ENCODE measurements at regions of chr20 and their contacts with region 1.

Region 1: GRCh38 chr20:63537525-63538203 is 488 bp upstream of the PTK6 start:
- DNase-seq: peak; percentile 84 to 97 (median 92)
- ATAC-seq: peak; percentile 90
- H3K4me3 ChIP-seq: peak overlapping the region; percentile 48 to 53
- H3K4me3 Mint-ChIP-seq: peak overlapping the region; percentile 75
- H3K27ac ChIP-seq: peak overlapping the region; percentile 34 to 84
- H3K27ac Mint-ChIP-seq: peak overlapping the region; percentile 81
- H3K4me1 ChIP-seq: peaks cover 22% of the 10 kb centered on the region
- H3K4me1 Mint-ChIP-seq: peaks cover 14% of the 10 kb centered on the region
- H3K27me3 ChIP-seq: no peaks in the 10 kb centered on the region
- H3K27me3 Mint-ChIP-seq: no peaks in the 10 kb centered on the region
- CTCF ChIP-seq: peak; percentile 91

Region 2: DNA sequence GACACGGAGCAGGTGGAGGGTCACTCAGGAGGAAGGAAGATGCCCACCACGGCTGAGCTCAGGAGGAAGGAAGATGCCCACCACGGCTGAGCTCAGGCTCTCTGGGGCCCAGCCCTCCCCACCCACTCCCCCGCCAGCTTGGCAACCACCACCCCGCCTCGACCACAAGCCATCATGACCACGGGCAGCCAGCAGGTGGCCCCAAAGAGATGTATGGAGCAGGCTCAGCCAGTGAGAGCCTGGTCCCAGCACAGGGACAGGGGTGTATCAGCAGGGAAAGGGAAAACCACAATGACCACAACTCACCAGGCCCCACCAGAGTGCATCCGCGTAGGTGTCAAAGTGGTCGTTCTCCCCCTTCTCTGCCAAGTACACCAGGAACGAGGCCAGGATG is 95.6 kb before region 1 on chr20:
- CTCF ChIA-PET with region 1: no interaction called
- POLR2A ChIA-PET with region 1: no interaction called
- intact Hi-C with region 1: no loop called
- DNase-seq: peak; percentile 23 to 75 (median 62)
- ATAC-seq: peak; percentile 71
- H3K4me3 ChIP-seq: no peak overlapping the region
- H3K4me3 Mint-ChIP-seq: no peak overlapping the region
- H3K27ac ChIP-seq: no peak overlapping the region
- H3K27ac Mint-ChIP-seq: peak overlapping the region; percentile 4
- H3K4me1 ChIP-seq: peaks cover 17% of the 10 kb centered on the region
- H3K4me1 Mint-ChIP-seq: peaks cover 15% of the 10 kb centered on the region
- H3K27me3 ChIP-seq: no peaks in the 10 kb centered on the region
- H3K27me3 Mint-ChIP-seq: peaks cover 2% of the 10 kb centered on the region
- CTCF ChIP-seq: no peak

Region 3: DNA sequence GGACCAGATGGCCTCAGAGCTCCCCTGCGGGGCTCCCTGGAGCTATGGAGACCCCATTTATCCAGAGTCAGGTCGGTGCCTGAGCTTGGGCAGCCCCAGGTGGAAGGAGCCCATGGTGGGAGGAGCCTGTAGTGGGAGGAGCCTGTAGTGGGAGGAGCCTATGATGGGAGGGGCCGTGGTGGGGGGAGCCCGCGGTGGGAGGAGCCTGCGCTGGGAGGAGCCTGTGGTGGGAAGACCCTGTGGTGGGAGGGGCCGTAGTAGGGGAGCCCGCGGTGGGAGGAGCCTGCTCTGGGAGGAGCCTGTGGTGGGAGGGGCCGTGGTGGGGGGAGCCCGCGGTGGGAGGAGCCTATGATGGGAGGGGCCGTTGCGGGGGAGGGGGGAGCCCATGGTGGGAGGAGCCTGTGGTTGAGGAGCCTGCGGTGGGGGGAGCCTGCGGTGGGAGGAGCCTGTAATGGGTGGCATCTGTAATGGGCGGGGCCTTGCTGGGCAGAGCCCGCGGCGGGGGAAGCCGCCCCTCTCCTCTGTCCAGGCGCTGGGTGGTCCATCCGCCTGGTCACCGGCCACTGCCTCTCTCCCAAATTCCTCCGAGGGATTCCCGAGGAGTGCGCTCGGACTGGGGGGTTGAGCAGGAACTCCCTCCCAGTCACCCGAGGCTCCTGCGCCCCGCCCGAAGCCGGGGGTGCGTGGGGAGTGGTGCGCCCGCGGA is 15.7 kb after region 1 on chr20:
- CTCF ChIA-PET with region 1: interaction called, 16 read pairs
- POLR2A ChIA-PET with region 1: interaction called, 11 read pairs
- intact Hi-C with region 1: loop called (anchors 1 kb)
- DNase-seq: peak; percentile 76 to 93 (median 87)
- ATAC-seq: peak; percentile 81
- H3K4me3 ChIP-seq: peak overlapping the region; percentile 51 to 55
- H3K4me3 Mint-ChIP-seq: peak overlapping the region; percentile 70
- H3K27ac ChIP-seq: peak overlapping the region; percentile 17 to 61
- H3K27ac Mint-ChIP-seq: peak overlapping the region; percentile 89
- H3K4me1 ChIP-seq: peaks cover 19% of the 10 kb centered on the region
- H3K4me1 Mint-ChIP-seq: peaks cover 20% of the 10 kb centered on the region
- H3K27me3 ChIP-seq: peaks cover 0 to 2% of the 10 kb centered on the region in 2 experiments
- H3K27me3 Mint-ChIP-seq: peaks cover 4% of the 10 kb centered on the region
- CTCF ChIP-seq: no peak

Region 4: GRCh38 chr20:63627129-63627750 is 89.6 kb after region 1 on chr20:
- CTCF ChIA-PET with region 1: interaction called, 5 read pairs
- POLR2A ChIA-PET with region 1: interaction called, 3 read pairs
- intact Hi-C with region 1: loop called (anchors 5 kb)
- DNase-seq: peak; percentile 90 to 97 (median 94)
- ATAC-seq: peak; percentile 77
- H3K4me3 ChIP-seq: peak overlapping the region; percentile 91 to 100
- H3K4me3 Mint-ChIP-seq: peak overlapping the region; percentile 97
- H3K27ac ChIP-seq: peak overlapping the region; percentile 81 to 91
- H3K27ac Mint-ChIP-seq: peak overlapping the region; percentile 93
- H3K4me1 ChIP-seq: peaks cover 39% of the 10 kb centered on the region
- H3K4me1 Mint-ChIP-seq: peaks cover 43% of the 10 kb centered on the region
- H3K27me3 ChIP-seq: no peaks in the 10 kb centered on the region
- H3K27me3 Mint-ChIP-seq: no peaks in the 10 kb centered on the region
- CTCF ChIP-seq: no peak

Region 5: GRCh38 chr20:63739130-63740069 is 201.7 kb after region 1 on chr20 and contains the start of gene SLC2A4RG:
- CTCF ChIA-PET with region 1: interaction called, 4 read pairs
- POLR2A ChIA-PET with region 1: interaction called, 5 read pairs
- intact Hi-C with region 1: loop called in 1 of 2 experiments (anchors 5 kb)
- DNase-seq: peak; percentile 37 to 88 (median 66)
- ATAC-seq: peak; percentile 17
- H3K4me3 ChIP-seq: peak within 1 kb of the TSS; percentile 80 to 94
- H3K4me3 Mint-ChIP-seq: peak within 1 kb of the TSS; percentile 92
- H3K27ac ChIP-seq: peak within 1 kb of the TSS; percentile 40 to 48
- H3K27ac Mint-ChIP-seq: no peak within 1 kb of the TSS
- H3K4me1 ChIP-seq: peaks cover 41% of the 10 kb centered on the region
- H3K4me1 Mint-ChIP-seq: peaks cover 16% of the 10 kb centered on the region
- H3K27me3 ChIP-seq: no peaks in the 10 kb centered on the region
- H3K27me3 Mint-ChIP-seq: no peaks in the 10 kb centered on the region
- CTCF ChIP-seq: no peak
- total RNA-seq, gene SLC2A4RG: 79.3 to 90.0 TPM

Region 6: GRCh38 chr20:63955827-63956663 is 418.4 kb after region 1 on chr20 and contains the start of gene UCKL1:
- CTCF ChIA-PET with region 1: no interaction called
- POLR2A ChIA-PET with region 1: no interaction called
- intact Hi-C with region 1: loop called (anchors 5 kb)
- DNase-seq: peak; percentile 78 to 93 (median 89)
- ATAC-seq: peak; percentile 81
- H3K4me3 ChIP-seq: peak within 1 kb of the TSS; percentile 73 to 95
- H3K4me3 Mint-ChIP-seq: peak within 1 kb of the TSS; percentile 82
- H3K27ac ChIP-seq: peak within 1 kb of the TSS; percentile 64 to 77
- H3K27ac Mint-ChIP-seq: peak within 1 kb of the TSS; percentile 76
- H3K4me1 ChIP-seq: peaks cover 28% of the 10 kb centered on the region
- H3K4me1 Mint-ChIP-seq: peaks cover 34% of the 10 kb centered on the region
- H3K27me3 ChIP-seq: no peaks in the 10 kb centered on the region
- H3K27me3 Mint-ChIP-seq: no peaks in the 10 kb centered on the region
- CTCF ChIP-seq: no peak
- total RNA-seq, gene UCKL1: 29.6 to 33.7 TPM

Region 7: DNA sequence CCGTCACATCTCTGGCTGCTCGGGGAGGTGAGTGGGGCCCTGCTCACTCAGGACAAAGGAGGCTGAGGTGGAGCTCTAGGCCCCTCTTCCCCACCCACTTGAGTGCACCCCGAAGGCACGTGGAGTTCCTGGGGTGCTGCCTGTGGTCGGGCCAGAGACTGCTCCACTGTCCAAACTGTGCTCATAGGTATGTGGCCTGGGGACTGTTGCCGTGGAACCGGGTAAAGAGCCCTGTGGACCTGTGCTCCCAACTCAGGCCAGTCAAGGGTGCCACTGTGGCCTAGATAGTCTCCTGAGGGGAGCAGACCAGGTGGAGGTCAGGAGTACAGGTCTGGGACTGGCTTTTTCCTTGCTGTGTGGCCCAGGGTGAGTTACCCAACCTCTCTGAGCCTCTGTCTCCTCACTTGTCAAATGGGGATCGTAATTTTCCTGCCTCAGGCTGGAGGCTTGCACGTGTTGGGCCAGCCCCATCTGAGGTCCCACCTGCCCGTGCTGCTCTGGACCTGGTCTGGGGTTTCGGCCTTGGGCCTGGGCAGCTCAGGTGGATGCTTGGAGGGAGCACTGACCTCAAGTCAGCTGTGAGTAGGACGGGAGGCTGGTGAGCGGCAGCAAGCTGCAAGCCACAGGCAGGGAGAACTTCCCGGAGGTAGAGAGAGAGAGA is 582.1 kb after region 1 on chr20:
- CTCF ChIA-PET with region 1: interaction called, 6 read pairs
- POLR2A ChIA-PET with region 1: no interaction called
- intact Hi-C with region 1: loop called in 1 of 2 experiments (anchors 5 kb)
- DNase-seq: peak in 3 of 9 experiments; percentile 2 to 50 (median 27)
- ATAC-seq: peak; percentile 4
- H3K4me3 ChIP-seq: peak overlapping the region; percentile 36 to 38
- H3K4me3 Mint-ChIP-seq: peak overlapping the region; percentile 72
- H3K27ac ChIP-seq: peak overlapping the region in 1 of 2 experiments; percentile 39
- H3K27ac Mint-ChIP-seq: peak overlapping the region; percentile 62
- H3K4me1 ChIP-seq: peaks cover 9% of the 10 kb centered on the region
- H3K4me1 Mint-ChIP-seq: peaks cover 8% of the 10 kb centered on the region
- H3K27me3 ChIP-seq: peaks cover 0 to 3% of the 10 kb centered on the region in 2 experiments
- H3K27me3 Mint-ChIP-seq: peaks cover 4% of the 10 kb centered on the region
- CTCF ChIP-seq: no peak

Measured in CD8-positive, alpha-beta T cell (primary cell).